Calu3 (cell line): ENCODE measurements at regions of chr16 and their contacts with region 1.

Region 1: DNA sequence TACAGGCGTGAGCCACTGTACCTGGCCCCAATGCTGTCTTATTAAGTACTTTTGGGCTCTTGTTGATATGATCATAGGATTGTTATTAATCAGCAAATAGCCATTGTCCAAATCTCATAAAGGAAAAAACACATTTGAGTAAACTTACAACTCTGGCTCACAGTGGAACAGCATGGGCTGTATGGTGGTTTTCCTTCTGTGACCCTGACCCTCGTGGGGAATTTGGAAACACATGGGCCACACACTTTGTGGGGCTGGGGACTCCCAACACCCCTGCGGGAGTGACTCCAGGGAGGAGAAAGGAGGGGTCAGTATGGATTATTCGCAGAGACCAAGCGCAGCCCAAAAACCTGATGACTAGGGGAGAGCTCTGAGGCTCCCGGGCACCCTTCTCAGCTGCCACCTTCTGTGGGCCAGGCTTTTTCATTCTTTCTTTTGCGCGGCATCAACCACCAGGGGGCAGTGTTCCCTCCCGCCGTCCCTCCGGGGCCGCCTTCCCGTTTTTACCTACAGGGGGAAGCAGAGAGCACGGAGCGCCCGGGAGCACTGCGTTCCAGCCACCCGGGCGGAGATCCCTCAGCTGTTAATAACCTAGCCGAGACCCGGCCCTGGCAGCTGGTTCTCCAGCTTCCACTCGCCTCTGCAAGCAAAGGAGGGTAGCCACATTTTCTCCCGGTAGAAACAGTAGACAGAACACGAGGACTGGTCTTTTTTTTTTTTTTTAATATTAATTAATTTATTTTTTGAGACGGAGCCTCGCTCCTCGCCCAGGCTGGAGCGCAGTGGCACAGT is 9.7 kb downstream of the TSNAXIP1 start:
- DNase-seq: peak; percentile 95
- H3K4me3 Mint-ChIP-seq: no peak overlapping the region
- H3K27ac Mint-ChIP-seq: no peak overlapping the region
- H3K4me1 Mint-ChIP-seq: no peaks in the 10 kb centered on the region
- H3K27me3 Mint-ChIP-seq: peaks cover 11% of the 10 kb centered on the region
- CTCF ChIP-seq: peak; percentile 99

Region 2: GRCh38 chr16:67760206-67760955 is 56.1 kb before region 1 on chr16:
- CTCF ChIA-PET with region 1: no interaction called
- intact Hi-C with region 1: no loop called
- DNase-seq: no peak
- H3K4me3 Mint-ChIP-seq: no peak overlapping the region
- H3K27ac Mint-ChIP-seq: no peak overlapping the region
- H3K4me1 Mint-ChIP-seq: no peaks in the 10 kb centered on the region
- H3K27me3 Mint-ChIP-seq: no peaks in the 10 kb centered on the region
- CTCF ChIP-seq: no peak

Region 3: DNA sequence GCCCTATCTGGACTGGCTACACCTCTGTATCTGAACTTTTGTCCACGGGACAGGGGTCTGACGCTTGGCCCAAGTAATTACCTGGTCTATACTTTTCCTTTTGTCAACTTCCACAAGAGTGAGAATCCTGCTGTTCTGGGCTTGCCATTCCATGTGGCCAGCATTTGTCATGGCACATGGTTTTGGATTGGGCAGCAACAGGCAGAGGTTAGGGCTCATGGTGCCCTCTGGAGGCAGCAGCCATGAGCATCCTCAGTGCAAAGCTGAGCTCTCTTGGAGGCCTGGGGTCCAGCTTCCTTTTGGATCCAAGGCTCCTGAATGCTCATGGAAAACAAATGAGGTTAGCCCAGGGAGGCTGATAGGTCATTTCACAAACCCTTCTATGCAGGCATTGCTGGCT is 48.9 kb after region 1 on chr16:
- CTCF ChIA-PET with region 1: interaction called, 18 read pairs
- intact Hi-C with region 1: no loop called
- DNase-seq: peak; percentile 46
- H3K4me3 Mint-ChIP-seq: no peak overlapping the region
- H3K27ac Mint-ChIP-seq: no peak overlapping the region
- H3K4me1 Mint-ChIP-seq: peaks cover 29% of the 10 kb centered on the region
- H3K27me3 Mint-ChIP-seq: no peaks in the 10 kb centered on the region
- CTCF ChIP-seq: peak; percentile 20

Region 4: GRCh38 chr16:67928561-67929364 is 112.3 kb after region 1 on chr16:
- CTCF ChIA-PET with region 1: interaction called, 15 read pairs
- intact Hi-C with region 1: loop called (anchors 1 kb)
- DNase-seq: peak; percentile 86
- H3K4me3 Mint-ChIP-seq: no peak overlapping the region
- H3K27ac Mint-ChIP-seq: no peak overlapping the region
- H3K4me1 Mint-ChIP-seq: no peaks in the 10 kb centered on the region
- H3K27me3 Mint-ChIP-seq: no peaks in the 10 kb centered on the region
- CTCF ChIP-seq: peak; percentile 83